ENCODE measurements at regions of chr11 and their contacts with region 1.

Region 1: GRCh38 chr11:5600374-5600851 is 4.0 kb downstream of the TRIM6 start:
- DNase-seq: peak; percentile 78 to 80
- H3K4me3 ChIP-seq: no peak overlapping the region
- H3K4me1 ChIP-seq: no peaks in the 10 kb centered on the region; the same call in none of the 2 replicates
- H3K27me3 ChIP-seq: no peaks in the 10 kb centered on the region

Region 2: GRCh38 chr11:5405173-5405572 is 195.2 kb before region 1 on chr11:
- in situ Hi-C with region 1: no loop called
- DNase-seq: no peak
- H3K4me3 ChIP-seq: no peak overlapping the region
- H3K4me1 ChIP-seq: no peaks in the 10 kb centered on the region
- H3K27me3 ChIP-seq: peaks cover 3% of the 10 kb centered on the region; the same call in 1 of the 2 replicates

Region 3: GRCh38 chr11:5690216-5690615 is 89.8 kb after region 1 on chr11:
- in situ Hi-C with region 1: loop called (anchors 10 kb)
- DNase-seq: peak; percentile 52 to 55
- H3K4me3 ChIP-seq: peak overlapping the region; percentile 29
- H3K4me1 ChIP-seq: peaks cover 28% of the 10 kb centered on the region
- H3K27me3 ChIP-seq: no peaks in the 10 kb centered on the region

Region 4: DNA sequence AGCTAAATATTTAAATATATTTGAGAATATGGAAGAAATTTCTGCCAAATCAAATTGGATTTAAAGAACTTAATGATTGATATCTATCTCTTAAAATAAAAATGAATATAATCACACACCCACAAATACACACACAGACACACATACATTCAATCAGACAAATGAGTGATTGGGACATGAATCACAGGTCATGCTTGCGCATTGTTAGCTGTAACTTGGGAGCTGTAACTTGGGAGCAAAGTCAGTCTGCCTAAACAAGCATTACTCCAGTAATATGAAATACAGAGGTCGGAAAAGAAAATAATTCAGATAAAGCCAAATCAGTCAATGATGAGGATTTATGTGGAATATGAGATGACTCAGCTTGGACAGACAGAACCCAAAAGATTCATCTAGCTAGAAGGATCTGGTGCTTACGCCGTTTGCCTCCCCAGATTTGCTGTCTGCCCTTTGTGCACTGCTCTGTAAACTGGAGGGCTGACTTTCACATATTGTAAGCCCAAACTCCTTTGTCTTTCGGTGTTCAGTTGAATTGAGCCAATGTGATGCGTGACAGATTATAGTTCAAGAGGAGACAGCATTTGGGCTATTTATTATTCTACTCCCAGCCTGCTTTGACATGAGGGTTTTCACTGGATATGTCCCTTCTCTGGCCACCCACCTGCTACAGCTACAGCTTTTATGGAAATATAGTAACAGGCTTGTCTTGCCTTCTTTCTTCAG is 137.4 kb after region 1 on chr11:
- in situ Hi-C with region 1: no loop called
- DNase-seq: no peak
- H3K4me3 ChIP-seq: no peak overlapping the region
- H3K4me1 ChIP-seq: no peaks in the 10 kb centered on the region
- H3K27me3 ChIP-seq: peaks cover 3% of the 10 kb centered on the region; the same call in 1 of the 2 replicates

Measured in HAP-1 (cell line).